Gastrocnemius medialis (tissue), 4 donors: ENCODE measurements at regions of chr12 and their contacts with region 1.

Region 1: DNA sequence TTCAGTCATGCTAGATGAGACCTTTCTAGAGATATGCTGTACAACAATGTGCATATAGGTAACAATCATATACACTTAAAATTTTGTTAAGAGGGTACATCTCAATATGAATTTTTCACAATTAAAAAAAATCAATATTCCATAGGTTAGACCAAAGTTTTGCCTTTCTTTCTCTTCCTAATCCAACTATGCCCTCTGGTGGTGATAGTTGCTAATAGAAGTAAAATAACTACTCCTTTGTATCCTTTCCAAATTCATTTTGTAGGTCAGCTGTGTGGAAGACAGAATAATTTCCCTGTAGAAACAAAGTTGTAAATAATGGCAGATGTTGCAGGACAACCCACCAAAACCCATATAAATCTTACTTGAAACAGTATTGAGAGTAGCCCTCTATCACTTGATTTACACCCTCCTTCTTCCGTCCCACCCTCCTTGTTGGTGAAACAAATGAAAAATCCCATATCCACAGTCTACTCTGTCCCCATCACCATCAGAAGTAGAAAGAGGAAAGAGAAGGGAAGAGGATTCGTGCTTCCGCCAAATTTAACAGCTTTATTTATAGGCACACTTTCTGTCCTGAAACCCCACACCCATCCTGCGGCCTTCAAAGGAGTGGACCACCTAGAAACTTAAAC is 34.2 kb upstream of the KICS2 start:
- DNase-seq: no peak
- ATAC-seq: peak; percentile 32 to 39
- H3K4me3 ChIP-seq: no peak overlapping the region
- H3K27ac ChIP-seq: no peak overlapping the region
- H3K4me1 ChIP-seq: peaks cover 0 to 18% of the 10 kb centered on the region in 2 donors
- H3K27me3 ChIP-seq: no peaks in the 10 kb centered on the region
- CTCF ChIP-seq: peak; percentile 58 to 77 (median 74)
- POLR2A ChIP-seq: no peak

Region 2: GRCh38 chr12:63470161-63470560 is 786.1 kb before region 1 on chr12:
- in situ Hi-C with region 1: no loop called
- intact Hi-C with region 1: no loop called
- DNase-seq: no peak
- ATAC-seq: no peak
- H3K4me3 ChIP-seq: no peak overlapping the region
- H3K27ac ChIP-seq: no peak overlapping the region
- H3K4me1 ChIP-seq: no peaks in the 10 kb centered on the region
- H3K27me3 ChIP-seq: no peaks in the 10 kb centered on the region
- CTCF ChIP-seq: no peak
- POLR2A ChIP-seq: no peak

Region 3: DNA sequence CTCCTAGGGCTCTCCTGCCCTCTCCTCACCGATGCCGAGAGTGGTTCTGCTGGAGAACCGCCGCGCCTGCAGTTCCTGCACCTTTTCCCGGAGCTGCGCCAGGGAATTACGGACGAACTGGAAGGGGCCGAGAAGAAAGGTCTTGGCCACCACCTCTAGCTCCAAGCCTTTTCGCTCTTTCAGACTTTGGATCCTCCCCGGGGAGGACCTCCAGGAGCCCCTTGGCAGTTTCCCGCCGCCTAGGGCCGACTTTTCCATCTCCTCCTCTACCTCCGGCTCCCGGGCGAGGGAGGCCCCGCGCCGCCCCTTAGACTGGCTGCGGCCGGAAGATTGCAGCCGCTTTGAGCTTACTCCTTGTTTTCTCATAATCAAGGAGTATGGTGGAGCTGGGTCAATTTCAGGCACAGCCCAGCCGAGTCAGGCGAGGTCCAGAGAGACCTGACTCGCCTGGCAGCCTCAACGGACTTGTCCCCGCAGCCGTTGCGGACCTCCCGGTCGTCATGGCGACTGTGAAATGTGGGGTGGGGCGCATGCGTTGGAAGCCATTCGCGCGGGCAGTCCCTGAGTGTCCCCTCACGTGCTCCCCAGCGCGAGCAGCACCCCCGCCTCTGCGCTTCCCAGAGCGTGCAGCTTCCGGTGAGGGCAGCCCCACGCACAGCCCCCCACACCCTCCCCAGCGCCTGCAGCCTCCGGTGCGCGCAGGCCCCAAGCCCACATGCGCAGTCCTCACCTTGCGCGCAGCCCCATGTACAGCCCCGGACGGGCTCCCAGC is 588.1 kb before region 1 on chr12 and contains the start of gene DPY19L2:
- in situ Hi-C with region 1: loop called in 1 of 4 experiments (anchors 25 kb)
- intact Hi-C with region 1: no loop called
- DNase-seq: peak; percentile 4 to 14
- ATAC-seq: peak in 1 of 2 donors; percentile 36
- H3K4me3 ChIP-seq: peak within 1 kb of the TSS; percentile 55 to 70 (median 64)
- H3K27ac ChIP-seq: peak within 1 kb of the TSS in 3 of 4 donors; percentile 33 to 44 (median 34)
- H3K4me1 ChIP-seq: no peaks in the 10 kb centered on the region
- H3K27me3 ChIP-seq: no peaks in the 10 kb centered on the region
- CTCF ChIP-seq: no peak
- POLR2A ChIP-seq: no peak
- total RNA-seq, gene DPY19L2: 0.13 to 1.5 (median 0.27) TPM in 3 of 4 donors, not detected in the other

Region 4: DNA sequence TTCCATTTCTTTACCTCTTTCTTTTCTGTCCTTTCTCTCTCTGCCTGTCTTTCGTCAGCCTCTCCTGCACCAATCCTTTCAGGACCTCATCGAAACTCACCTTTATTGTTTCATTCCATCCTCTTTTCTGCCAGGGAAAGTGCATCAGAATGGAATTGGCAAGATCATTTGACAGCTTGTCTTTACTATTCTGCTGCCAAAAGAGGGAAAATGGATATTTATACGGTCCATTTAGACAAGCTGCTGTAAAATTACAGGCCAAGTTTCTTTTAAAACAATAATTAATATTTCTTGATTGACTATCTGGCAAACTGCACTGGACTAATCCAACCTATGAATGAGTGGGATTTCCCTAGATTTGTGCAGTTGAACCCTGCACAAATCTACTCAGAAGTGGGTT is 419.3 kb before region 1 on chr12:
- in situ Hi-C with region 1: loop called (anchors 5 kb)
- intact Hi-C with region 1: loop called (anchors 1 kb)
- DNase-seq: no peak
- ATAC-seq: no peak
- H3K4me3 ChIP-seq: no peak overlapping the region
- H3K27ac ChIP-seq: no peak overlapping the region
- H3K4me1 ChIP-seq: no peaks in the 10 kb centered on the region
- H3K27me3 ChIP-seq: no peaks in the 10 kb centered on the region
- CTCF ChIP-seq: no peak
- POLR2A ChIP-seq: no peak

Region 5: DNA sequence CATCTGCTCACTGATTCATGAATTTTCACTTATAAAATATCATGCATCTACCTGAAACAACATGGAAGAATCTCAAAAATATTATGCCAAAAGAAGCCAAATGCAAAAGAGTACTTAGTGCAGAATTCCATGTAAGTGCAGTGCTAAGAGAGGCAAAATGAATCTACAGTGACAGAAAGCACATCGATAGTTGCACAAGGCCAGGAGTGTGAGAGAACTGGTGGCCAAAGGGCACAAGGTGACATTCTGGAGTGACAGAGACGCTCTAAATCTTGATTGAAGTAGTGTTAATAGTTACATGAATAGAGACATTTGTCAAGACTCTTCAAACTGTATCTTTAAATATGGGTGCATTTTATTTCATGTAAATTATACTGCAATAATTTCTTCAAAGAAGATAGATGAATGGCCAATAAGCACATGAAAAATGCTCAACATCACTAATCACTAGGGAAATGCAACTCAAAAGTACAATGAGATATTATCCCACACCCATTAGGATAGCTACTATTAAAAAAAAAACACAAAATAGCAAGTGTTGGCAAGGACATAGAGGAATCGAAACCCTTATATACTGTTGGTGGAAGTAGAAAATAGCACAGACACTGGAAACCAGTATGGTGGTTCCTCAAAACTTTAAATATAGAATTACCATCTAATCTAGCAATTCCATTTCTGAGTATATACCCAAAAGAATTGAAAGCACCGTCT is 37.5 kb after region 1 on chr12:
- in situ Hi-C with region 1: no loop called
- intact Hi-C with region 1: no loop called
- DNase-seq: no peak
- ATAC-seq: no peak
- H3K4me3 ChIP-seq: no peak overlapping the region
- H3K27ac ChIP-seq: no peak overlapping the region
- H3K4me1 ChIP-seq: no peaks in the 10 kb centered on the region
- H3K27me3 ChIP-seq: no peaks in the 10 kb centered on the region
- CTCF ChIP-seq: no peak
- POLR2A ChIP-seq: no peak

Region 6: GRCh38 chr12:65464930-65465329 is 1208.6 kb after region 1 on chr12:
- in situ Hi-C with region 1: no loop called
- intact Hi-C with region 1: no loop called
- DNase-seq: no peak
- ATAC-seq: no peak
- H3K4me3 ChIP-seq: no peak overlapping the region
- H3K27ac ChIP-seq: no peak overlapping the region
- H3K4me1 ChIP-seq: no peaks in the 10 kb centered on the region
- H3K27me3 ChIP-seq: no peaks in the 10 kb centered on the region
- CTCF ChIP-seq: no peak
- POLR2A ChIP-seq: no peak